Psoas muscle (tissue), 8 donors: ENCODE measurements at regions of chr6 and their contacts with region 1.

Region 1: GRCh38 chr6:154733012-154733625 is at the start of gene SCAF8:
- DNase-seq: peak; percentile 87 to 93
- ATAC-seq: peak; percentile 83 to 89 (median 84)
- H3K4me3 ChIP-seq: peak within 1 kb of the TSS; percentile 97
- H3K27ac ChIP-seq: peak within 1 kb of the TSS; percentile 100
- H3K4me1 ChIP-seq: peaks cover 43% of the 10 kb centered on the region
- H3K27me3 ChIP-seq: no peaks in the 10 kb centered on the region
- CTCF ChIP-seq: peak; percentile 91
- total RNA-seq, gene SCAF8: 40.1 to 49.0 (median 46.2) TPM

Region 2: GRCh38 chr6:154767003-154767723 is 34.0 kb after region 1 on chr6:
- intact Hi-C with region 1: loop called in 1 of 2 experiments (anchors 5 kb)
- DNase-seq: no peak
- ATAC-seq: peak in 3 of 4 donors; percentile 44 to 67 (median 45)
- H3K4me3 ChIP-seq: no peak overlapping the region
- H3K27ac ChIP-seq: peak overlapping the region; percentile 78
- H3K4me1 ChIP-seq: peaks cover 59% of the 10 kb centered on the region
- H3K27me3 ChIP-seq: no peaks in the 10 kb centered on the region
- CTCF ChIP-seq: no peak

Region 3: GRCh38 chr6:154786132-154786868 is 53.2 kb after region 1 on chr6:
- intact Hi-C with region 1: loop called (anchors 5 kb)
- DNase-seq: no peak
- ATAC-seq: no peak
- H3K4me3 ChIP-seq: no peak overlapping the region
- H3K27ac ChIP-seq: no peak overlapping the region
- H3K4me1 ChIP-seq: peaks cover 3% of the 10 kb centered on the region
- H3K27me3 ChIP-seq: no peaks in the 10 kb centered on the region
- CTCF ChIP-seq: no peak

Region 4: DNA sequence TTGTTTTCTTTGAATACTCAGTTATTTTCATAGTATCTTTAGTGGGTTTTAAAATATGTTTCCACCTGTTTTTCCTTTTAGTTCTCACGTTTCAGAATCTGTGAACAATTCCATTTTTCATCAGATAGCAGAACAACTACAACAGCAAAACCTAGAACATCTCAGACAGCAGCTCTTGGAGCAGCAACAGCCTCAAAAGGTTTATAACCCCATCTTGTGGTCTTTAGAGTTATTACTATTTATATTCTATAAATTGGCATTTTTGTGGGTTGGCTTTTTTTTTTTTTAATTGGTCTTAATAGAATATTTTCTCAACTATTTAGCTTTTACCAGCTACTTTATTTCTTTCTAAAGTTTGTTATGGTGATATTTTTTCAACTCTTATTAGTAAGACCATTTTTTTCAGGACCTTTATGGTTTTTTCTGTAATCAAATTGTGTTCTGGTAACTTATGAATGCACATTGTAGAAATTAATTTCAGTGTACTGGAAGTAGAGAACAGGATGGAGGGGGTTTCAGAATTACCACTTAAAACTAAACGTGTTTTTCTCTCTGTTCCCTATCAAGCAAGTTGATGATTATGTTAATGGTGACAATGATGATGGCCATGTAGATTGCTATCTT is 72.3 kb after region 1 on chr6:
- intact Hi-C with region 1: loop called (anchors 1 to 5 kb)
- DNase-seq: no peak
- ATAC-seq: peak; percentile 48 to 87 (median 58)
- H3K4me3 ChIP-seq: no peak overlapping the region
- H3K27ac ChIP-seq: no peak overlapping the region
- H3K4me1 ChIP-seq: peaks cover 9% of the 10 kb centered on the region
- H3K27me3 ChIP-seq: no peaks in the 10 kb centered on the region
- CTCF ChIP-seq: peak; percentile 56